Heart left ventricle (tissue), 16 donors: ENCODE measurements at regions of chr6 and their contacts with region 1.

Region 1: GRCh38 chr6:70706491-70707123 is 38.9 kb downstream of the SMAP1 start:
- DNase-seq: no peak
- ATAC-seq: no peak
- H3K4me3 ChIP-seq: no peak overlapping the region
- H3K27ac ChIP-seq: no peak overlapping the region
- H3K4me1 ChIP-seq: peaks cover 0 to 36% (median 9%) of the 10 kb centered on the region in 12 donors
- H3K27me3 ChIP-seq: no peaks in the 10 kb centered on the region
- CTCF ChIP-seq: peak; percentile 53 to 86 (median 74)
- POLR2A ChIP-seq: no peak

Region 2: GRCh38 chr6:70955441-70956190 is 249.0 kb after region 1 on chr6:
- intact Hi-C with region 1: loop called in 6 of 10 experiments (anchors 2 to 5 kb)
- DNase-seq: peak; percentile 80 to 91 (median 80)
- ATAC-seq: peak; percentile 64 to 98 (median 94)
- H3K4me3 ChIP-seq: peak overlapping the region; percentile 42 to 70 (median 58)
- H3K27ac ChIP-seq: no peak overlapping the region
- H3K4me1 ChIP-seq: peaks cover 0 to 24% (median 18%) of the 10 kb centered on the region in 12 donors
- H3K27me3 ChIP-seq: peaks cover 0 to 53% (median 30%) of the 10 kb centered on the region in 9 donors
- CTCF ChIP-seq: peak; percentile 72 to 93 (median 83)
- POLR2A ChIP-seq: no peak